ENCODE measurements at regions of chr1 and their contacts with region 1.

Region 1: DNA sequence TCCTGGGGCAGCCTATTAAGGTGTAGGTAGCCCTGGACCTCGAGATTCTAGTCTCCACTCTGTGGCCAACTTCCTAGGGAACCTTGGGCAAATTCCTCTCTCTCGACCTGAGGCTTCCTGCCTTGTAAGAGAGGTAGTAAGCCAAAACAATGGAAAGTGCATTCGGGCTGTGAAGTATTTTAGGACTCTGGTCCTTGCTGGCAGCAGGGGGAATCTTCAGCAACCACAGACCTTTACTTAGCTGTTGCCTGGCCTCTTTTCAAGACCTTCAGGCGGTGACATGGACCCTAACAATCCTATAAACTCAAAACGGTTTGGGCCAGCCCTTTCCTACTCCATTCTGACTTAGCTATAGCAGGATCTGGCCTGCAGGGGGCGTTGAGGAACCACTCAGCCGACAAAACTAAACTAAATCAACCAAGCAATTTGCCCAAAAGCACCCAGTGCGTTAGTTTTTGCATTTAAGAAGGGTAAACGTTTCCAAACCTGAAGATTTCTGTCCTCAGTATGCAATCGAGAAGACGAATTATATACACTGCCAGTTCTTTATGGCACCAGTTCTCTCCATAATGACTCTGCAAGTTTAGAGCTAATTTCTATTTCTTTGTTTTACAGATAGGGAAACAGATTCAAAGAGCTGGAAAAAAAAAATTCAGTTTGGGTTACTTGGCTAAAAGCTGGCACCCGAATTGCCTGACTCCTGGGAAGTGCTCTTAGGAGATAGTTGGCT is 10.9 kb upstream of the SESN2 start:
- DNase-seq: peak; percentile 91
- ATAC-seq: peak; percentile 16
- H3K4me3 Mint-ChIP-seq: peak overlapping the region; percentile 35
- H3K27ac Mint-ChIP-seq: peak overlapping the region; percentile 94
- H3K4me1 Mint-ChIP-seq: peaks cover 58% of the 10 kb centered on the region
- H3K27me3 Mint-ChIP-seq: no peaks in the 10 kb centered on the region

Region 2: DNA sequence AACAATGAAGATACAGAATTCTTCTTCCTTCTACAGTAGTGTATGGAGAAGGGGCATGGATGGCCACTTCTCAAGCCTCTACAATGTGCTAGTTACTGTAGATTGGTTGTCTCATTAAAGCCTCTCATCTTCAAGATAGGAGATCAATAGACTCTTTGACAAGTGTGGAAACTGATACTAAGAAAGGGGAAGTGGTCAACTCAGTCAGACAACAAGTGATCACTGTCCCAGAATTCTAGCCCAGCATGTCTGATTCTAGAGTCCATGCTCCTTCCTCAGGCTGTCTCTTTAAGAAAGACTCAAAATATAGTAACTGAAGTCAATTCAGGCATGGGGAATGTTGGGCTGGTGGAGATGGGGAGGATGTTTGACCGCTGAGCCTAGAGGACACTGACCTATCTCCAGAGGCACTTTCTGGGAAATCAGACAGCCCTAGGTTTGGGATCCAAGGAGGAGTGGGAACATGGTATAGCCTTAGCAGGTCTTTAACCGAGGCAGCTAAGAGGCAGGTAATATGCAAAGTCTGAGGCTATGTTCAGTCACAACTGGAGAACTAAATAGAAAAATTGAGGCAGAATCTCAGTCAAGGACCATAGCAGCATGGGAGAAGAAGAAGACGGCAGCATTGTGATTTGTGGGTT is 120.7 kb before region 1 on chr1:
- CTCF ChIA-PET with region 1: no interaction called
- POLR2A ChIA-PET with region 1: no interaction called
- DNase-seq: no peak
- ATAC-seq: no peak
- H3K4me3 Mint-ChIP-seq: no peak overlapping the region
- H3K27ac Mint-ChIP-seq: peak overlapping the region; percentile 5
- H3K4me1 Mint-ChIP-seq: peaks cover 12% of the 10 kb centered on the region
- H3K27me3 Mint-ChIP-seq: peaks cover 38% of the 10 kb centered on the region

Region 3: GRCh38 chr1:28259307-28260167 is 11.1 kb after region 1 on chr1 and contains the start of gene SESN2:
- CTCF ChIA-PET with region 1: interaction called, 125 read pairs
- POLR2A ChIA-PET with region 1: interaction called, 84 read pairs
- DNase-seq: peak; percentile 100
- ATAC-seq: peak; percentile 92
- H3K4me3 Mint-ChIP-seq: peak within 1 kb of the TSS; percentile 82
- H3K27ac Mint-ChIP-seq: peak within 1 kb of the TSS; percentile 86
- H3K4me1 Mint-ChIP-seq: peaks cover 50% of the 10 kb centered on the region
- H3K27me3 Mint-ChIP-seq: no peaks in the 10 kb centered on the region
- total RNA-seq, gene SESN2: 12.5 to 12.6 TPM

Region 4: DNA sequence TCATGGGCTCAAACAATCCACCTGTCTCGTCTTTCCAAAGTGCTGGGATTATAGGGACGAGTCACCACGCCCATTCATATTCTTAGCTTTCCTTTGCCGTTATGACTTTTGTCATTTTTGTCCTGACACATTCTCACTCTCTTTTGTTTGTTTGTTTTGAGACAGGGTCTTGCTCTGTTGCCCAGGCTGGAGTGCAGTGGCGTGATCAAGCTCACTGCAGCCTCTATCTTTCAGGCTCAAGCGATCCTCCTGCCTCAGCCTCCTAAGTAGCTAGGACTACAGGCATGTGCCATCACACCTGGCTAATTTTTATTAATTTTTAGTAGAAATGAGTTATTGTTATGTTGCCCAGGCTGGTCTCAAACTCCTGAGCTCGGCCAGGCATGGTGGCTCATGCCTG is 68.6 kb after region 1 on chr1:
- CTCF ChIA-PET with region 1: interaction called, 12 read pairs
- POLR2A ChIA-PET with region 1: no interaction called
- DNase-seq: no peak
- ATAC-seq: no peak
- H3K4me3 Mint-ChIP-seq: no peak overlapping the region
- H3K27ac Mint-ChIP-seq: no peak overlapping the region
- H3K4me1 Mint-ChIP-seq: no peaks in the 10 kb centered on the region
- H3K27me3 Mint-ChIP-seq: peaks cover 3% of the 10 kb centered on the region

Region 5: GRCh38 chr1:28354121-28354520 is 105.7 kb after region 1 on chr1:
- CTCF ChIA-PET with region 1: interaction called, 49 read pairs
- POLR2A ChIA-PET with region 1: no interaction called
- DNase-seq: no peak
- ATAC-seq: no peak
- H3K4me3 Mint-ChIP-seq: no peak overlapping the region
- H3K27ac Mint-ChIP-seq: no peak overlapping the region
- H3K4me1 Mint-ChIP-seq: peaks cover 6% of the 10 kb centered on the region
- H3K27me3 Mint-ChIP-seq: no peaks in the 10 kb centered on the region

Region 6: DNA sequence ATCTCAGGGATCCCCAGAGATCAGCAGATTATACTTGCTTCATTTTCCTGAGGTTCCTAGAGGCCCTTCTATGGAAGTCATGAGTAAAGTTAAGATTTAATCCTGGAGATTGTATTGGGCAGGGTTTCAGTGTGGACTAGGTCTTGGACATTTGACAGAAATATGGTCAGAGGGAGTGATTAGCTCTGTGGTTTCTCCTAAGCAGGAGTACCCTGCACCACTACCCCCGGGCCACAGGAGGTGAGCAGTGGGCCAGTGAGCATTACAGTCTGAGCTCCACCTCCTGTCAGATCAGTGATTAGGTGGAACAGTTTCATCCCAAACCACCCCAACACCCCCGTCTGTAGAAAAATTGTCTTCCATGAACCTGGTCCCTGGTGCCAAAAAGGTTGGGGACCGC is 164.3 kb after region 1 on chr1:
- CTCF ChIA-PET with region 1: interaction called, 19 read pairs
- POLR2A ChIA-PET with region 1: interaction called, 3 read pairs
- DNase-seq: no peak
- ATAC-seq: no peak
- H3K4me3 Mint-ChIP-seq: no peak overlapping the region
- H3K27ac Mint-ChIP-seq: no peak overlapping the region
- H3K4me1 Mint-ChIP-seq: peaks cover 14% of the 10 kb centered on the region
- H3K27me3 Mint-ChIP-seq: no peaks in the 10 kb centered on the region